Thyroid gland (tissue), 4 donors: ENCODE measurements at regions of chr16 and their contacts with region 1.

Region 1: GRCh38 chr16:21644674-21645073 is 7.7 kb downstream of the IGSF6 start:
- DNase-seq: no peak
- H3K4me3 ChIP-seq: no peak overlapping the region
- H3K27ac ChIP-seq: no peak overlapping the region
- H3K4me1 ChIP-seq: no peaks in the 10 kb centered on the region
- H3K27me3 ChIP-seq: no peaks in the 10 kb centered on the region
- CTCF ChIP-seq: no peak
- POLR2A ChIP-seq: no peak

Region 2: DNA sequence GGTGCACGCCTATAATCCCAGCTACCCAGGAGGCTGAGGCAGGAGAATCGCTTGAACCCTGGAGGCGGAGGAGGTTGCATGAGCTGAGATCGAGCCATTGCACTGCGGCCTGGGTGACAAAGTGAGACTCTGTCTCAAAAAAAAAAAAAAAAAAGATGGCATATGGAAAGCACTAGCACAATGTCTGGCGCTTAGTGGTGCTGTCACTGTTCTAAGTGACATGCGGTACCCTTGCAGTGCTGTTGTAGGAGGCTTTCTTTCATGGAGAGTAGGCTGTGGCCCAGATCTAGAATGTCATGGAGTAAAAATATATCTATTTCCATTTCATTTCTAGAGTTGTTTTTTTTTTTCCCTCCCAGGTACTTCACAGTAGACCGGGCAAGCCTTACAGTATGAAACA is 59.9 kb before region 1 on chr16:
- intact Hi-C with region 1: loop called (anchors 5 kb)
- DNase-seq: no peak
- H3K4me3 ChIP-seq: no peak overlapping the region
- H3K27ac ChIP-seq: peak overlapping the region in 1 of 3 donors; percentile 46
- H3K4me1 ChIP-seq: peaks cover 4 to 7% of the 10 kb centered on the region in 2 donors
- H3K27me3 ChIP-seq: no peaks in the 10 kb centered on the region
- CTCF ChIP-seq: no peak
- POLR2A ChIP-seq: no peak